Gastrocnemius medialis (tissue), 4 donors: ENCODE measurements at regions of chr6 and their contacts with region 1.

Region 1: GRCh38 chr6:41779793-41780545 is at the start of gene FRS3:
- DNase-seq: peak; percentile 98
- ATAC-seq: peak; percentile 90 to 94
- H3K4me3 ChIP-seq: peak within 1 kb of the TSS; percentile 82 to 91 (median 86)
- H3K27ac ChIP-seq: peak within 1 kb of the TSS; percentile 83 to 90 (median 88)
- H3K4me1 ChIP-seq: peaks cover 19 to 24% of the 10 kb centered on the region in 2 donors
- H3K27me3 ChIP-seq: no peaks in the 10 kb centered on the region
- CTCF ChIP-seq: peak; percentile 93 to 97 (median 95)
- POLR2A ChIP-seq: peak in 1 of 2 donors; percentile 51
- total RNA-seq, gene FRS3: 2.9 to 6.9 (median 5.5) TPM

Region 2: DNA sequence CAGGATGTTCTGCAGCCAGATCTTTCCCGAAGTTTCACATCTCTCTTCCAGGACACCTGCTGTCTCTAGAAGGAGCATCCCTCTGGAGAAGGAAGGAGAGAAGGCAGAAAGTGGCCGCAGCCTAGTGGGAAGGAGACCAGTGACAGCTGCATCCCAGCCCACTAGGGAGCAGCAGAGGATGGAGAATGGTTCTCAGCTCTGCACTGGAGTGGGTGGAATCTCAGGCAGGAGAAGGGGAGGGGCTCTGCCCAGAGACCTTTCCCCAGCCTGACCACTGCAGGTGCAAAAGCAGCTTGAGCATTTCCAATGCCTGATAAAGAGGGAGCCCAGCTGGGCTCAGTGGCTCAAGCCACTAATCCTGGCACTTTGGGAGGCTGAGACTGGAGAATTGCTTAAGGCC is 412.3 kb before region 1 on chr6:
- in situ Hi-C with region 1: no loop called
- intact Hi-C with region 1: loop called (anchors 10 kb)
- DNase-seq: no peak
- ATAC-seq: no peak
- H3K4me3 ChIP-seq: no peak overlapping the region
- H3K27ac ChIP-seq: no peak overlapping the region
- H3K4me1 ChIP-seq: peaks cover 10 to 15% of the 10 kb centered on the region in 2 donors
- H3K27me3 ChIP-seq: peaks cover 50 to 54% (median 52%) of the 10 kb centered on the region in 3 donors
- CTCF ChIP-seq: no peak
- POLR2A ChIP-seq: no peak

Region 3: DNA sequence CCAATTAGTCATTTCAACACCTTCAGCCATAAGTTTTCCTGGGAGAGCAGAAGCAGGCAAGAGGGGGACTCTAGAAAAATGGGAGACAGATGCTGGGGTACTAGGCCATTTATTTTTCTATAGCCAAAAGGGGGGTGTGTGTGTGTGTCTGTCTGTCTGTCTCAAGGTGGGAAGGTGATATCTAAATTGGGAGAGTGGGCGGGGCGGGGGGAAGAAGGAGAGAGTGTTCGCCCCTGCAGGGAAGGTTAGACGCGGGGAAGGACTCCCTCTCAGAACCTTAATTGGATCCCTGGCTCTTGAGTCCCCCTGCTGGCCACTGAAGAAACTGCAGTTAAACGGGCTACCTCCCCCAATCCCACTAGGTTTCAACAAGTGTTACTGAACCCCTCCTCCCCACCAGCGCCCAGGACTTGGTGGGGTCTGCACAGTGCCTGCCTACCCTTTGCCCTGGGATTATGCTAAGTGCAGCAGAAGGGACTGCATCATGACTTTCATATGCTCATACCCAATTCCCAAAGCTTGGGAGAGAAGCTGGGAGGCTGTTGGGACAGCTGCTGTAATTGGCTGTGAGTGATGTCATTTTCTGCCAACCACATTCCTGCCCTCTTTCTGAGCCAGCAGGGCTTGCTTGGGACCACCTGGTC is 188.0 kb before region 1 on chr6:
- in situ Hi-C with region 1: loop called in 1 of 4 experiments (anchors 10 kb)
- intact Hi-C with region 1: no loop called
- DNase-seq: peak; percentile 32 to 59
- ATAC-seq: peak; percentile 80 to 88
- H3K4me3 ChIP-seq: no peak overlapping the region
- H3K27ac ChIP-seq: no peak overlapping the region
- H3K4me1 ChIP-seq: no peaks in the 10 kb centered on the region
- H3K27me3 ChIP-seq: no peaks in the 10 kb centered on the region
- CTCF ChIP-seq: peak; percentile 90 to 95 (median 92)
- POLR2A ChIP-seq: no peak

Region 4: DNA sequence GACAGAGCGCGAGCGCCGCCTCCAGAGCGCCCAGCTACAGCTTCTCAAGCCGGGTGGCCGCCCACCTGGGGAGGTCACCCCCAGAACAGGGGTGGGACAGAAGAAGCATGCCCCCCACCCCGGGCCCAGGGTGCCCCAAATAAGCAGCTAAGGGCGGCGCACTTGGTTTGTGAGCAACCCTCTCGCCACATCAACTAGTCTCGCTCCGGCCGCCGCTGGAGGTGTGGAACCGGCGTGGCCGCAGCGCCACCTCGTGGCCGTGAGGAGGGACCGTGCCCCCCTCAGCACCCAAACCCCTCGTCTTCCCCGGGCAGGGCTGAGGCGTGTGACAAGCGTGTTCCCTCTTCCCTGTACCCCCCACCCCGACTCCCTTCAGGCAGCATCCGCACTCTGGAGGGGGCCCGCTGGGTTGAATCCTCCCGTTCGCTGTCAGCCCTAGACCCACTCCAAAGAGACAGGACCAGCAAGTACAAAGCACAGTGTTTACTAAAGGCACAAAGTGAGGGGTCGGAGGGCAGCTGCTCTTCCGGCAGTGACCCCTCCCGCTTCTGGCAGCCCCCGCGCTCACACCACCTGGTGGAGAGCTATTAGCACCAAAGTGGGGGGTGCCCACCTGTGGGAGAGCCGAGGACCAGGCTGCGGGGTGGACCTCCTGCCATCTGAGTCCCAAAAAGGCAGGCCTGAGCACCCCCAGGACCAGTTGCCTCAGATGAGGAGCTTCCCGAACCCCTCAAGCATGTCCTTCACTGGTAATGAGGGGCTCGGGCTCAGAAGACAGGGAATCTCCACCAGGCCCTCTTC is 96.3 kb before region 1 on chr6:
- in situ Hi-C with region 1: no loop called
- intact Hi-C with region 1: loop called (anchors 5 kb)
- DNase-seq: peak; percentile 51 to 69
- ATAC-seq: peak; percentile 57 to 67
- H3K4me3 ChIP-seq: peak overlapping the region; percentile 40 to 61 (median 50)
- H3K27ac ChIP-seq: peak overlapping the region; percentile 52 to 67 (median 58)
- H3K4me1 ChIP-seq: peaks cover 13 to 14% of the 10 kb centered on the region in 2 donors
- H3K27me3 ChIP-seq: no peaks in the 10 kb centered on the region
- CTCF ChIP-seq: peak; percentile 78 to 95 (median 90)
- POLR2A ChIP-seq: no peak

Region 5: GRCh38 chr6:42043787-42044475 is 264.0 kb after region 1 on chr6:
- in situ Hi-C with region 1: loop called (anchors 5 to 10 kb)
- intact Hi-C with region 1: loop called (anchors 1 kb)
- DNase-seq: peak; percentile 55 to 76
- ATAC-seq: peak; percentile 76 to 81
- H3K4me3 ChIP-seq: peak overlapping the region in 1 of 4 donors; percentile 3
- H3K27ac ChIP-seq: peak overlapping the region in 3 of 4 donors; percentile 89 to 94 (median 93)
- H3K4me1 ChIP-seq: peaks cover 9 to 41% of the 10 kb centered on the region in 2 donors
- H3K27me3 ChIP-seq: peaks cover 0 to 7% (median 0%) of the 10 kb centered on the region in 3 donors
- CTCF ChIP-seq: peak; percentile 90 to 98 (median 96)
- POLR2A ChIP-seq: no peak